Activated CD4-positive, alpha-beta T cell treated with anti-CD3 and anti-CD28 coated beads for 36 hours (primary cell): ENCODE measurements at regions of chr7 and their contacts with region 1.

Region 1: DNA sequence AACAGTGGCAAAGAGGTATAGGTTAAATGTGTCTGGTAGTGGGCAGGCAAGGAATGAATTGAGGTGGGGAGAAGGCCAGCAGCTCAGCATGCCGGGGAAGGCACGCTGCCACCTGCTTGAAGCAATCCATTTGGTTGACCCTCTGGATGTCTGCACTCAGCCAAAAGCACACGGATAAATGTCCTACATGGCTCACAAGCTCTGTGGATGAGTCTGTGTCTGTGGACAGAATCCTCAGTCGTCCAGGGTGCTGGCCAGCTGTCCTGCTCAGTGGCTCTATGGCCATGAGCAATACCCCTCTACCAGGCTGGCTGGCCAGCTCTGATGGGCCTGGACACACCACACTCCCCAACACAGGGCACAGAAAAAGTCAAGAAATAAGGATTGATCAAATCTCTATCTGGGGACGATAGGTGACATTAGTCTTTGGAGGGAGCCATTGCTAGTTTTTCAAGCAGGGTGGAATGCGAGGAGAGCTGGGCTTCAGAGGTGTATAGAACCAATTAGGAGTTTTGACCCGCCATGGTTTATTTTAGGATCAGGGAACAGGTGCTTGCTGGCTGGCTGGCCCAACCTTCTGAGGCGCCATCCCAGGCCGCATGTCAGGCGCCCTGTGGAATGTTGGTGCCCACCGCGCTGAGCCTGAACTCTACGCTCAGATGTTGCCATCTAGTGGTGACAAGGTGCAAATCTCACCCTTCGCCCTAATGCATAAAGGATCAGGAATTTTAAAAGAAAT is 493.4 kb downstream of the TNS3 start:
- DNase-seq: peak; percentile 44
- ATAC-seq: no peak
- H3K4me3 Mint-ChIP-seq: no peak overlapping the region
- H3K27ac Mint-ChIP-seq: no peak overlapping the region
- H3K4me1 Mint-ChIP-seq: no peaks in the 10 kb centered on the region
- H3K27me3 Mint-ChIP-seq: peaks cover 5% of the 10 kb centered on the region

Region 2: DNA sequence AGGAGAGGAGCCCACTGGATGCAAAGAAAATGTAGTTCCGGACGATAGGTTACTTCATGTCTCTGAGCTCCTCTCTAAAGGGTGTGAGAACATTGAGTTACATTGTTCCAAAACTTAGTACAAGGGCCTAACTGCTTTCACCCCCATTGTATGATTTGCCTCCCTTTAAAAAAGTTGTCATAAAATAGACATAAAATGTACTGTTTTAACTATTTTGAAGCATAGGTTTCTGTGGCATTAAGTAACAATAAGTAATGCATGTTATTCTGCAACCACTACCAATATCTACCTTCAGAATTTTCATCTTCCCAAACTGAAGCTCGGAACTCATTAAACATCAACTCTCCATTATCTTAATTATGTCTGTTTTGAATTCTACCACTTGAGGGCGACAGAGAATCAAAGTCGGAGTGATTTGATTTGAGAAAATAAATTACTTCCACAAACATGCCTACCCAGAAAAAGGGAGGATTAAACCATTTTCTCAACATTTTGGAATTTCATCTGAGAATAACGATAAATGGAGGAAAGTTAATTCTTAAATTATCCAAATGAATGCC is 1197.5 kb before region 1 on chr7:
- CTCF ChIA-PET with region 1: interaction called, 4 read pairs
- POLR2A ChIA-PET with region 1: no interaction called
- intact Hi-C with region 1: loop called in 1 of 2 experiments (anchors 1 kb)
- DNase-seq: no peak
- ATAC-seq: no peak
- H3K4me3 Mint-ChIP-seq: no peak overlapping the region
- H3K27ac Mint-ChIP-seq: no peak overlapping the region
- H3K4me1 Mint-ChIP-seq: no peaks in the 10 kb centered on the region
- H3K27me3 Mint-ChIP-seq: peaks cover 50% of the 10 kb centered on the region

Region 3: GRCh38 chr7:46776790-46777189 is 311.7 kb before region 1 on chr7:
- CTCF ChIA-PET with region 1: no interaction called
- POLR2A ChIA-PET with region 1: no interaction called
- intact Hi-C with region 1: loop called in 1 of 2 experiments (anchors 10 kb)
- DNase-seq: no peak
- ATAC-seq: no peak
- H3K4me3 Mint-ChIP-seq: no peak overlapping the region
- H3K27ac Mint-ChIP-seq: no peak overlapping the region
- H3K4me1 Mint-ChIP-seq: no peaks in the 10 kb centered on the region
- H3K27me3 Mint-ChIP-seq: no peaks in the 10 kb centered on the region